B cell (primary cell): ENCODE measurements at regions of chr11 and their contacts with region 1.

Region 1: DNA sequence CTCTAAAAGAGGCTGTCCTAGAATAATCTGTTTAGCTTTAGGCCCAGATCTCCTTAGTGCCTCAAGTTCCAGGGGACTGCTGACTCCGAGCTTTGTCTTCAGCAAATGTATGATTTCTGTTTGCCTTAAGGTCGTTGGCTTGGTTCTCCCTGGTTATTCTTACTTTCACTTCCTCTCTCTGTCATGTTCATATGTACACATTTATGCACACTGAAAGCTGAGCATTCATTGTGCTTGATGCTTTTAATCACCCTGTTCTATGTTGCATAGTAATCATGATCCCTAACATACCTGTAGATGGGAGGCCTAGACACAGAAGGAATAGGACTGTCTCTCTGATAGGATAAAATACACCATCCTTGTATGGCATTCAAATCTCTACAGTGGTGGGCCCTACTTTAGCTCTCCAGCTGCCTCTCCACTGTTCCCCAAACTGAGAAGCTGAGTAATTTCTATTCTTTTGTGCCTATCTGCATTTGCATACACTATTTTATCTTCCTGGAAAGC is 7.2 kb downstream of the PPFIBP2 start:
- DNase-seq: peak; percentile 79
- ATAC-seq: peak; percentile 57
- H3K4me3 ChIP-seq: peak overlapping the region in 1 of 5 experiments; percentile 12
- H3K4me3 Mint-ChIP-seq: no peak overlapping the region
- H3K27ac ChIP-seq: peak overlapping the region; percentile 85 to 87
- H3K27ac Mint-ChIP-seq: no peak overlapping the region
- H3K4me1 ChIP-seq: peaks cover 67 to 90% of the 10 kb centered on the region in 2 donors
- H3K4me1 Mint-ChIP-seq: peaks cover 4% of the 10 kb centered on the region
- H3K27me3 ChIP-seq: no peaks in the 10 kb centered on the region
- H3K27me3 Mint-ChIP-seq: no peaks in the 10 kb centered on the region
- CTCF ChIP-seq: no peak

Region 2: GRCh38 chr11:7341551-7341950 is 179.5 kb before region 1 on chr11:
- CTCF ChIA-PET with region 1: no interaction called
- POLR2A ChIA-PET with region 1: no interaction called
- intact Hi-C with region 1: no loop called
- DNase-seq: no peak
- ATAC-seq: no peak
- H3K4me3 ChIP-seq: no peak overlapping the region
- H3K4me3 Mint-ChIP-seq: no peak overlapping the region
- H3K27ac ChIP-seq: no peak overlapping the region
- H3K27ac Mint-ChIP-seq: no peak overlapping the region
- H3K4me1 ChIP-seq: no peaks in the 10 kb centered on the region
- H3K4me1 Mint-ChIP-seq: no peaks in the 10 kb centered on the region
- H3K27me3 ChIP-seq: peaks cover 0 to 11% (median 2%) of the 10 kb centered on the region in 4 experiments
- H3K27me3 Mint-ChIP-seq: peaks cover 52% of the 10 kb centered on the region
- CTCF ChIP-seq: no peak

Region 3: GRCh38 chr11:7473717-7474116 is 47.3 kb before region 1 on chr11:
- CTCF ChIA-PET with region 1: interaction called, 3 read pairs
- POLR2A ChIA-PET with region 1: no interaction called
- intact Hi-C with region 1: loop called (anchors 2 kb)
- DNase-seq: peak; percentile 76
- ATAC-seq: peak; percentile 98
- H3K4me3 ChIP-seq: no peak overlapping the region
- H3K4me3 Mint-ChIP-seq: peak overlapping the region; percentile 51
- H3K27ac ChIP-seq: peak overlapping the region; percentile 25 to 76
- H3K27ac Mint-ChIP-seq: peak overlapping the region; percentile 85
- H3K4me1 ChIP-seq: peaks cover 28 to 30% of the 10 kb centered on the region in 2 donors
- H3K4me1 Mint-ChIP-seq: peaks cover 36% of the 10 kb centered on the region
- H3K27me3 ChIP-seq: no peaks in the 10 kb centered on the region
- H3K27me3 Mint-ChIP-seq: no peaks in the 10 kb centered on the region
- CTCF ChIP-seq: no peak

Region 4: DNA sequence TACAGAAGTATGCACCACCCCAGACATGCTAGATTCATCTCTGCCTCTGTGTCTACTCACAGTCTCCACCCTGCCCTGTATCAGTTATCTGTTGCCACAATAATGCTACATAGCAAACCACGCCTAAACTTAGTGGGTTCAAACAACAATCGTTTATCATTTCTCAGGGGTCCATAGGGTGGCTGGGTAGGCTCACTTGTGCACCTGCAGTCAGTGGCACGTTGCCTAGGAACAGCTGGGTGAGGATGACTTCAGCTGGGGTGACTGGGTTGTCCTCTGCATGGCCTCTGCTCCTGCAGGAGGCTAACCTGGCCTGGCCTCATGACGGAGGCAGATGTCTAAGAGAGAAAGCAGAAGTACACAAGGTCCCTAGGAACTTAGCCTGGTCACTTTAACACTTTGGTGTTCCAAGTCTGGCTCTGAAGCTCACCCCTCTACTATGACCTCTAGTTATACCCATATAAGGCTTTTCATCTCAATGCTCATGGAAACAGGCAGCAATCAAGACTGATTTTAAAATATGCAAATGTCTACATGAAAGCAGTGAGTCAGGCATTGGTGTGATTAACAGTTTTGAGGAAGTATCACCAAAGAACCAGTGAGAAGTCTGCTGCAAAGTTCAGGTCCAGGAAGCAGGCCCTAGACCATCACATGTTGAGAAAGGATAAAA is 25.0 kb before region 1 on chr11:
- CTCF ChIA-PET with region 1: interaction called, 5 read pairs
- POLR2A ChIA-PET with region 1: interaction called, 13 read pairs
- intact Hi-C with region 1: loop called (anchors 1 kb)
- DNase-seq: peak; percentile 82
- ATAC-seq: peak; percentile 83
- H3K4me3 ChIP-seq: no peak overlapping the region
- H3K4me3 Mint-ChIP-seq: peak overlapping the region; percentile 76
- H3K27ac ChIP-seq: peak overlapping the region; percentile 79 to 90
- H3K27ac Mint-ChIP-seq: peak overlapping the region; percentile 94
- H3K4me1 ChIP-seq: peaks cover 67 to 73% of the 10 kb centered on the region in 2 donors
- H3K4me1 Mint-ChIP-seq: peaks cover 66% of the 10 kb centered on the region
- H3K27me3 ChIP-seq: no peaks in the 10 kb centered on the region
- H3K27me3 Mint-ChIP-seq: no peaks in the 10 kb centered on the region
- CTCF ChIP-seq: no peak

Region 5: GRCh38 chr11:7533199-7534041 is 12.4 kb after region 1 on chr11:
- CTCF ChIA-PET with region 1: interaction called, 9 read pairs
- POLR2A ChIA-PET with region 1: interaction called, 6 read pairs
- intact Hi-C with region 1: loop called (anchors 1 kb)
- DNase-seq: peak; percentile 32
- ATAC-seq: no peak
- H3K4me3 ChIP-seq: no peak overlapping the region
- H3K4me3 Mint-ChIP-seq: peak overlapping the region; percentile 46
- H3K27ac ChIP-seq: peak overlapping the region in 1 of 2 donors; percentile 48
- H3K27ac Mint-ChIP-seq: peak overlapping the region; percentile 27
- H3K4me1 ChIP-seq: peaks cover 32 to 47% of the 10 kb centered on the region in 2 donors
- H3K4me1 Mint-ChIP-seq: peaks cover 89% of the 10 kb centered on the region
- H3K27me3 ChIP-seq: no peaks in the 10 kb centered on the region
- H3K27me3 Mint-ChIP-seq: no peaks in the 10 kb centered on the region
- CTCF ChIP-seq: no peak

Region 6: DNA sequence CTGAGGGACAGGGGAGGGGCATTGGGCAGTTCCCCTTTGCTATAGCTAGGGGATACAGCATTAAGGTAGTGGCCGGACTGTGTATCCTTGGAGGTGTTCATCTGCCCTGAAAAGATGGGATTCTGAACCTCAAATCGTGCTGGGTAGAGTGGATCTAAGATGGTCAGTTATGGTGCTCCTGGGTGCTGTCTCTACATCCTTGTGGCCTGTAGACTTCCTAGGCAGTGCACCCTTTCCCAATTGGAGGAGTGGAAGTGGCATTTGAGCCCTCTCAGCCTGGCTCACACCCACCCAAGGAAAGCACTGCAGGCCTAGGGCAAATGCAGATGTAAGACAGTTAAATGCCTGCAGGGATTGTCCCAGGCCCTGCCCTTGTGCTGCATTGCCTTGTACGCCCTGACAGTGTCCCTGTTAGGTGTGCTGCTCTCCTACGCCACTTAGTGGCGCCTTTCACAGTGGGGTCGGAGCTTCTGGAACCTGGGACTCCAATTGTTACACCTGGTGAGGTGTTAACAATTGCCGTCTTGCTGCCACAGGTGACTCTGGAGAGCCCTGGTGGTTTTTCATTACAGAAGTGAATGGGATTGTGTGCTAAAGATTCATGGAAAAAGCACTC is 27.7 kb after region 1 on chr11:
- CTCF ChIA-PET with region 1: interaction called, 7 read pairs
- POLR2A ChIA-PET with region 1: no interaction called
- intact Hi-C with region 1: loop called (anchors 2 kb)
- DNase-seq: peak; percentile 48
- ATAC-seq: peak; percentile 88
- H3K4me3 ChIP-seq: no peak overlapping the region
- H3K4me3 Mint-ChIP-seq: no peak overlapping the region
- H3K27ac ChIP-seq: no peak overlapping the region
- H3K27ac Mint-ChIP-seq: peak overlapping the region; percentile 15
- H3K4me1 ChIP-seq: no peaks in the 10 kb centered on the region
- H3K4me1 Mint-ChIP-seq: peaks cover 22% of the 10 kb centered on the region
- H3K27me3 ChIP-seq: no peaks in the 10 kb centered on the region
- H3K27me3 Mint-ChIP-seq: no peaks in the 10 kb centered on the region
- CTCF ChIP-seq: peak; percentile 49

Region 7: GRCh38 chr11:7706377-7706776 is 185.3 kb after region 1 on chr11 and contains the start of gene OVCH2:
- CTCF ChIA-PET with region 1: no interaction called
- POLR2A ChIA-PET with region 1: no interaction called
- intact Hi-C with region 1: no loop called
- DNase-seq: no peak
- ATAC-seq: no peak
- H3K4me3 ChIP-seq: no peak within 1 kb of the TSS
- H3K4me3 Mint-ChIP-seq: no peak within 1 kb of the TSS
- H3K27ac ChIP-seq: no peak within 1 kb of the TSS
- H3K27ac Mint-ChIP-seq: no peak within 1 kb of the TSS
- H3K4me1 ChIP-seq: no peaks in the 10 kb centered on the region
- H3K4me1 Mint-ChIP-seq: no peaks in the 10 kb centered on the region
- H3K27me3 ChIP-seq: peaks cover 0 to 10% (median 6%) of the 10 kb centered on the region in 4 experiments
- H3K27me3 Mint-ChIP-seq: peaks cover 58% of the 10 kb centered on the region
- CTCF ChIP-seq: no peak
- total RNA-seq, gene OVCH2: not detected in 2 replicates